Posterior cingulate gyrus (tissue), 11 donors: ENCODE measurements at regions of chr12 and their contacts with region 1.

Region 1: GRCh38 chr12:110449799-110450497 is at the start of gene ARPC3:
- DNase-seq: peak; percentile 89 to 99 (median 94)

Region 2: DNA sequence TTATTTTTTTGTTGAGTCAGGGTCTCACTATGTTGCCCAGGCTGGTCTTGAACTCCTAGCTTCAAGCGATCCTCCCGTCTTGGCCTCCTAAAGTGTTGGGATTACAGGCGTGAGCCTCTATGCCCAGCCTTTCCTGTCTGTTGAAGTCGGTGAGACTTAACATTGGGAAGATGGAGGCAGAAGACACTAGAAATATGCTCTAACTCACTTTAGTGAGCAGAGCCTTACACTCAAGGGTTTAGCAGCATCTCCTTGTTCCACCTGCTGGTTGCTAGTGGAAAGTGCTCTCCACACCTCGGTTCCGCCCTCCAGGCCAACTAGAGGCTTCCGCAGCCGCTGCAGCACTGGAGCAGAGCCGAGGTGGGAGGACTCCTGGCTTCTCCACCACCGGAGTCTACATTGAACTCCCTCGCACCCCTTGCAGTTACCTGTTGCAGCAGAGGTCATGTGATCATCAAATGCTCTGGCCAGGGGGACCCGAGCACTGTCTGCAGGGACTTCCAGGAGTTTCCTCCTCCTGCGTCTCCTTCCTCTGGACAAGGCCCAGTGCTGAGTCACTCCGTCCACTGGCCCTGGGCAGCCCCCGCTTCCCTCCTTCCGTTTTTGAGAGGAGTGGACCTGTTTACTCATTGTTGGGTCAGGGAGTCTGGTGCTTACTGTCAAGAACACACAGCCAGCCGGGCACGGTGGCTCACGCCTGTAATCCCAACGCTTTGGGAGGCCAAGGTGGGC is 248.4 kb after region 1 on chr12:
- intact Hi-C with region 1: no loop called
- DNase-seq: peak in 5 of 10 donors; percentile 20 to 91 (median 34)

Region 3: DNA sequence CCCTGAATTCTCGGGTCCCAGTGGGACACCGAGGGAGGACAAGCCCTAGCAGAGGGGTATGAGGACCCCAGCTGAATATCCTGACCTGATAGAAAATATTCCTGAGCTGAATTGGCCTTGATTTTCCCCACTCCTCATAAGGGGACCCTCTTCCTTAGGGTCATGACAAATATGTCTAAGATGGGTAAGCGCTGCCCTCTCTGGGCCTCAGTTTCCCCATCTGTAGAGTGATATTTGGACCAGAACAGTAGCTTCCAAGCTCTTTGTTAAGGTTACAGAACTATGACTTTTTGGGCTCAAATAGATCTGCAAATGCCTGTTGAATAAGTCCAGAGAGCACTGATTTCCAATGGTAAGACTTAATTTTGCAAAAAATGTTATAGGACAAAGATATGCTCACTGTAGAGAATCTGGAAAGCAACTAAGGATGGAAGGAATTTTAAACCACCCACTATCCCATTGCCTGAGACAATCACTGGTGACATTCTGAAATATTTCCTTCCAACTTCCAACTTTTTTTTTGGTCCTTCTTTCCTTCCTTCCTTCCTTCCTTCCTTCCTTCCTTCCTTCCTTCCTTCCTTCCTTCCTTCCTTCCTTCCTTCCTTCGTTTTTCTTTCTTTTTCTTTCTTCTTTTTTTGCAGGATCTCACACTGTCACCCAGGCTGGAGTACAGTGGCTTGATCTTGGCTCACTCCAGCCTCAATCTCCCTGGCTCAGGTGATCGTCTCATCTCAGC is 438.5 kb after region 1 on chr12:
- intact Hi-C with region 1: loop called (anchors 2 kb)
- DNase-seq: no peak

Region 4: GRCh38 chr12:110983806-110984205 is 533.9 kb after region 1 on chr12:
- intact Hi-C with region 1: no loop called
- DNase-seq: no peak

Region 5: GRCh38 chr12:111204788-111205241 is 754.9 kb after region 1 on chr12:
- intact Hi-C with region 1: no loop called
- DNase-seq: peak in 2 of 10 donors; percentile 45 to 66